Calu3 (cell line): ENCODE measurements at regions of chr1 and their contacts with region 1.

Region 1: DNA sequence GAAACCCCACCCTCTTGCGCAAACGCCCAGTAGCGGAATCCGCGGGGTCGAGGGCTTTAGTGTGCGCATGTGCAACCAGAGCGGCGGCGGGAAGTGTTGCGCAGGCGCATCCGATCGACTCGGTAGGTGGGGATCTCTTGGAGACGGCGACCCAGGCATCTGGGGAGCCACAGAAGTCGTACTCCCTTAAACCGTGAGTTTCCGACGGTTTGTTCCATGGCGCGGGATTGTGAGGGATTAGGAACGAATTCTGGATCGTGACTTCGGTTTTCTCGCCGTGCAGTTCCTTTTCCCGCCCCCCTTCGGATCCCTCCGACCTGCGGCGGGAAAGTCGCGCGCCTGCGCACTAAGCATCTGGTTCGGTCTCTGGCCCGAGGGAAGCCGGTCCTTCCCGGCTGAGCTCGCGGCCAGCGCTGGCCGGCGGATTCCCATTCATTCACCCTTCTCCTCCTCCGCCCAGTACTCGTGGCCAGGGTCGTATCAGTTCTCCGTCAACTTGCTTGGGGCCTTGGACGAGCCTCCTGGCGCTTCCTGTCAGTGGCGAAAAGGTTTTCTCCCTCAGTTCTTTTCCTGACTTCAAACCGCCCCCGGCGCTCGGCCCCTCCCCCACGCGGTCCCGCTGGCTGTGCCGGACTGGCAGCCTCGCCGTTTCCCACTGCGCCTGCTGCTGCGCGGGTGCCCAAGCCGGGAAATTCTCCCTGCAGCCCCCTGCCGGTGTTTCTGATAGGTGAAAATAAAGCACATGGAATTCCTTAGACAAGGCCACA is at the start of gene CDC7:
- DNase-seq: peak; percentile 95
- H3K4me3 Mint-ChIP-seq: no peak within 1 kb of the TSS
- H3K27ac Mint-ChIP-seq: no peak within 1 kb of the TSS
- H3K4me1 Mint-ChIP-seq: peaks cover 18% of the 10 kb centered on the region
- H3K27me3 Mint-ChIP-seq: no peaks in the 10 kb centered on the region
- CTCF ChIP-seq: peak; percentile 61
- total RNA-seq, gene CDC7: 15.6 and 16.0 TPM in 2 replicates

Region 2: GRCh38 chr1:91404151-91405012 is 96.6 kb before region 1 on chr1 and contains the start of gene HFM1:
- CTCF ChIA-PET with region 1: interaction called, 4 read pairs
- intact Hi-C with region 1: loop called (anchors 2 kb)
- DNase-seq: peak; percentile 64
- H3K4me3 Mint-ChIP-seq: peak within 1 kb of the TSS; percentile 66
- H3K27ac Mint-ChIP-seq: no peak within 1 kb of the TSS
- H3K4me1 Mint-ChIP-seq: no peaks in the 10 kb centered on the region
- H3K27me3 Mint-ChIP-seq: peaks cover 51% of the 10 kb centered on the region
- CTCF ChIP-seq: no peak
- total RNA-seq, gene HFM1: not detected in 2 replicates

Region 3: DNA sequence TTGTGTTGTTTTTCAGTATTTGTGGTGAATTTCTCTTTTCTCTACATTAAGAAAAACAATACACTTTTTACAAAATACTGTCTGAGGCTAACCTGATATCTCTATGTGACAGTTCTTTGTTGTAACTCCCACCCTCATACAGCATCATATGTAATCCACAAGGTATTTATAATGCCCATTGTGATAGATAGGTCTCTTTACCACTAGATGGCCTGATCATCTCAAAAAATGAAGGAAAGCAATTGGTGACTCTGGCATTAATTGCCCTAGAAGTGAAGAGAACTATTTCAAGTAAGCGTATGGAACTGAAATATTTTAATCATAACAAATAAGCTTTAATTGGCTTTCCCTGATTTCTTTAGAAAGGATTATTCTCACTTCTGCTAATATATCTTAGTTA is 60.1 kb before region 1 on chr1:
- CTCF ChIA-PET with region 1: no interaction called
- intact Hi-C with region 1: loop called (anchors 5 kb)
- DNase-seq: no peak
- H3K4me3 Mint-ChIP-seq: no peak overlapping the region
- H3K27ac Mint-ChIP-seq: no peak overlapping the region
- H3K4me1 Mint-ChIP-seq: no peaks in the 10 kb centered on the region
- H3K27me3 Mint-ChIP-seq: peaks cover 30% of the 10 kb centered on the region
- CTCF ChIP-seq: no peak

Region 4: DNA sequence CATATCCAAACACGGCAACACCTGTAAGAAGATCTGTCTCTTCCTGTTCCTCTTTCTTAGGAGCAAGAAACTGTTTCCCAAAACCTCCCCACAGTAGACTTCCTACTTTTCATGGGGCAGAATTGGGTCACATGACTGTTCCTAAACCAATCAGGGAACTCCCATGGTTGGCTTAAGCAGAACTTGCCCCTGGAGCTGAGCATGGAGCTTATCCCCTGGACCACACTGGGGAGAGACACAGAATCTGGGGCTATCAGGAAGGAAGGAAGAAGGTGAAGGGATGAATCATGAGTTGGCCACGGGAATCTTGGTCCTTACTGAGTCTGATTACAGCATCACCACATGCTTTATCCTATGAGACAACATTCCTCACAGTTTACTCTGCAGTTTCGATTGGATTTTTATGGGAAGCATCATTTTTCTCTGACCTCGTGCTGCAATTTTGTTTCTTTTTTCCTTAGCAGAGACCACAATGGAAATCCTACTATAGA is 81.5 kb after region 1 on chr1:
- CTCF ChIA-PET with region 1: no interaction called
- intact Hi-C with region 1: no loop called
- DNase-seq: no peak
- H3K4me3 Mint-ChIP-seq: no peak overlapping the region
- H3K27ac Mint-ChIP-seq: no peak overlapping the region
- H3K4me1 Mint-ChIP-seq: no peaks in the 10 kb centered on the region
- H3K27me3 Mint-ChIP-seq: no peaks in the 10 kb centered on the region
- CTCF ChIP-seq: no peak